HepG2 (cell line): ENCODE measurements at regions of chr7 and their contacts with region 1.

Region 1: GRCh38 chr7:117251687-117252086 is 71.2 kb downstream of the WNT2 start:
- DNase-seq: no peak
- ATAC-seq: no peak
- H3K4me3 ChIP-seq: no peak overlapping the region
- H3K27ac ChIP-seq: no peak overlapping the region
- H3K4me1 ChIP-seq: no peaks in the 10 kb centered on the region
- H3K27me3 ChIP-seq: peaks cover 0 to 6% of the 10 kb centered on the region in 2 experiments; a peak in 2 of 5 replicates
- CTCF ChIP-seq: no peak
- EP300 ChIP-seq: no peak
- POLR2A ChIP-seq: no peak
- RAD21 ChIP-seq: no peak

Region 2: DNA sequence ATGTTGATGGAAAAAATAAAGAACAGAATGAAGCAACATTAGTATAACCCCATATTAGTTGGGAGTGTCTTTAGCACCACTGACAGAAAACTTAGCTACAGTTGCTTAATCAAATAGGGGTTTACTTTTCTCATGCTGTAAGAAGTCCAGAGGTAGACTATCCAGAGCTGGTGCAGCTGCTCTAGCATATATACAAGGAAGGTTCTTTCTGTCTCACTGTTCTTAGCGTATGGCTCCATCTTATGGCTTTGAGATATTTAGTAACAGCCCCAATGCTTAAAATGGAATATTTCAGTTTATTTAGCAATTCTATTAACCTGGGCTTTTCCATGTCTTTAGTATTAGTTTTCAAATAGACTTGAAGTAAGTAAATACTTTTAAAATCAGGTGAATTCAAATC is 86.3 kb after region 1 on chr7:
- CTCF ChIA-PET with region 1: no interaction called
- POLR2A ChIA-PET with region 1: no interaction called
- in situ Hi-C with region 1: no loop called
- intact Hi-C with region 1: loop called (anchors 10 kb)
- DNase-seq: no peak
- ATAC-seq: no peak
- H3K4me3 ChIP-seq: no peak overlapping the region
- H3K27ac ChIP-seq: no peak overlapping the region
- H3K4me1 ChIP-seq: no peaks in the 10 kb centered on the region
- H3K27me3 ChIP-seq: no peaks in the 10 kb centered on the region
- CTCF ChIP-seq: no peak
- EP300 ChIP-seq: no peak
- POLR2A ChIP-seq: no peak
- RAD21 ChIP-seq: no peak